Caki2 (cell line): ENCODE measurements at regions of chr6 and their contacts with region 1.

Region 1: GRCh38 chr6:25889877-25890853 is 16.1 kb upstream of the SLC17A3 start:
- DNase-seq: peak; percentile 73

Region 2: GRCh38 chr6:25682324-25682723 is 207.8 kb before region 1 on chr6:
- in situ Hi-C with region 1: no loop called
- DNase-seq: no peak

Region 3: GRCh38 chr6:25953733-25954132 is 63.6 kb after region 1 on chr6:
- in situ Hi-C with region 1: no loop called
- DNase-seq: no peak

Region 4: GRCh38 chr6:26003102-26003694 is 113.0 kb after region 1 on chr6:
- in situ Hi-C with region 1: loop called (anchors 10 kb)
- DNase-seq: peak; percentile 50